ENCODE measurements at regions of chr3 and their contacts with region 1.

Region 1: GRCh38 chr3:127791211-127791946 is 30.9 kb downstream of the MGLL start:
- DNase-seq: peak; percentile 41
- ATAC-seq: peak; percentile 99
- H3K4me3 ChIP-seq: no peak overlapping the region
- H3K27ac ChIP-seq: no peak overlapping the region
- H3K4me1 ChIP-seq: peaks cover 13% of the 10 kb centered on the region
- H3K27me3 ChIP-seq: no peaks in the 10 kb centered on the region
- CTCF ChIP-seq: peak; percentile 51 to 58 (median 52); a peak in 5 of 6 replicates
- EP300 ChIP-seq: no peak
- POLR2A ChIP-seq: no peak
- RAD21 ChIP-seq: peak; percentile 68

Region 2: GRCh38 chr3:127775398-127776109 is 15.8 kb before region 1 on chr3:
- CTCF ChIA-PET with region 1: interaction called, 6 read pairs
- POLR2A ChIA-PET with region 1: no interaction called
- RAD21 ChIA-PET with region 1: interaction called, 14 read pairs
- SMC1A ChIA-PET with region 1: interaction called, 21 read pairs
- in situ Hi-C with region 1: no loop called
- intact Hi-C with region 1: no loop called
- DNase-seq: no peak
- ATAC-seq: peak; percentile 79
- H3K4me3 ChIP-seq: peak overlapping the region; percentile 19; the same call in 1 of the 2 replicates
- H3K27ac ChIP-seq: peak overlapping the region; percentile 94
- H3K4me1 ChIP-seq: peaks cover 67% of the 10 kb centered on the region
- H3K27me3 ChIP-seq: no peaks in the 10 kb centered on the region
- CTCF ChIP-seq: no peak
- EP300 ChIP-seq: peak in 1 of 2 experiments; percentile 41; a peak in 2 of 4 replicates
- POLR2A ChIP-seq: no peak
- RAD21 ChIP-seq: no peak

Region 3: DNA sequence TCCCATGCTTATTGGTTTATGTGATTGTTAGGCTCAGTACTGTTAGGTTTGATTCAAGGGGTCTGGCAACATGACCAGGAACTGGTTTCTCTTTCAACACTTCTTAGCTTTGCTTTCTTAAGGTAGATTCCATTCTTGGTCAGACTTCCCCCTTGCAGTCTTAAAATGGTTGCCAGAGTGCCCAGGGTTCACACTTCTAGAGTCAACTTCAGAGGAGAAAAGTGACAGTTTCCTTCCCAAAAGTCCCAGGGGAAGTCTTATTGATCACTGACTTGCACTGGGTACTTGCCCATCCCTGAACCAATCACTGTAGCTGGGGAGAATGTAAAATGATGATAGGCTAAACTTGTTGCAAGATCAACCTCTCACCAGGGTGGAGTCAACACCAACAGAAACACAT is 16.8 kb after region 1 on chr3:
- CTCF ChIA-PET with region 1: interaction called, 3 read pairs
- POLR2A ChIA-PET with region 1: interaction called, 3 read pairs
- RAD21 ChIA-PET with region 1: interaction called, 6 read pairs
- SMC1A ChIA-PET with region 1: interaction called, 11 read pairs
- in situ Hi-C with region 1: no loop called
- intact Hi-C with region 1: no loop called
- DNase-seq: peak; percentile 63
- ATAC-seq: peak; percentile 85
- H3K4me3 ChIP-seq: 0 out of 2 replicates have a peak overlapping the region, but pooled peaks have one; percentile 4
- H3K27ac ChIP-seq: peak overlapping the region; percentile 45
- H3K4me1 ChIP-seq: peaks cover 22% of the 10 kb centered on the region
- H3K27me3 ChIP-seq: no peaks in the 10 kb centered on the region
- CTCF ChIP-seq: no peak
- EP300 ChIP-seq: peak in 1 of 2 experiments; percentile 22; a peak in 1 of 4 replicates
- POLR2A ChIP-seq: no peak
- RAD21 ChIP-seq: no peak

Region 4: GRCh38 chr3:127970966-127971592 is 179.7 kb after region 1 on chr3:
- CTCF ChIA-PET with region 1: interaction called, 7 read pairs
- POLR2A ChIA-PET with region 1: no interaction called
- RAD21 ChIA-PET with region 1: interaction called, 4 read pairs
- SMC1A ChIA-PET with region 1: interaction called, 4 read pairs
- in situ Hi-C with region 1: no loop called
- intact Hi-C with region 1: loop called (anchors 2 kb)
- DNase-seq: peak; percentile 26
- ATAC-seq: peak; percentile 98
- H3K4me3 ChIP-seq: no peak overlapping the region
- H3K27ac ChIP-seq: no peak overlapping the region
- H3K4me1 ChIP-seq: no peaks in the 10 kb centered on the region
- H3K27me3 ChIP-seq: no peaks in the 10 kb centered on the region
- CTCF ChIP-seq: peak; percentile 72 to 93 (median 75); a peak in 5 of 6 replicates
- EP300 ChIP-seq: no peak
- POLR2A ChIP-seq: no peak
- RAD21 ChIP-seq: peak; percentile 94